Endothelial cell of umbilical vein (primary cell): ENCODE measurements at regions of chr2 and their contacts with region 1.

Region 1: GRCh38 chr2:33022989-33023727 is 76.4 kb downstream of the LTBP1 start:
- DNase-seq: peak; percentile 98
- H3K4me3 ChIP-seq: no peak overlapping the region
- H3K27ac ChIP-seq: peak overlapping the region; percentile 88
- H3K4me1 ChIP-seq: peaks cover 41% of the 10 kb centered on the region
- H3K27me3 ChIP-seq: no peaks in the 10 kb centered on the region
- CTCF ChIP-seq: no peak
- POLR2A ChIP-seq: peak; percentile 52

Region 2: GRCh38 chr2:32946314-32947075 is 76.7 kb before region 1 on chr2 and contains the start of gene LTBP1:
- CTCF ChIA-PET with region 1: interaction called, 6 read pairs
- POLR2A ChIA-PET with region 1: no interaction called
- dilution Hi-C with region 1: no loop called
- intact Hi-C with region 1: loop called (anchors 1 kb)
- DNase-seq: peak; percentile 77
- H3K4me3 ChIP-seq: peak within 1 kb of the TSS; percentile 50 to 86 (median 55)
- H3K27ac ChIP-seq: peak within 1 kb of the TSS; percentile 58
- H3K4me1 ChIP-seq: peaks cover 10% of the 10 kb centered on the region
- H3K27me3 ChIP-seq: no peaks in the 10 kb centered on the region
- CTCF ChIP-seq: peak; percentile 88 to 90
- POLR2A ChIP-seq: peak; percentile 14
- total RNA-seq, gene LTBP1: 68.2 and 107 TPM in 2 replicates

Region 3: DNA sequence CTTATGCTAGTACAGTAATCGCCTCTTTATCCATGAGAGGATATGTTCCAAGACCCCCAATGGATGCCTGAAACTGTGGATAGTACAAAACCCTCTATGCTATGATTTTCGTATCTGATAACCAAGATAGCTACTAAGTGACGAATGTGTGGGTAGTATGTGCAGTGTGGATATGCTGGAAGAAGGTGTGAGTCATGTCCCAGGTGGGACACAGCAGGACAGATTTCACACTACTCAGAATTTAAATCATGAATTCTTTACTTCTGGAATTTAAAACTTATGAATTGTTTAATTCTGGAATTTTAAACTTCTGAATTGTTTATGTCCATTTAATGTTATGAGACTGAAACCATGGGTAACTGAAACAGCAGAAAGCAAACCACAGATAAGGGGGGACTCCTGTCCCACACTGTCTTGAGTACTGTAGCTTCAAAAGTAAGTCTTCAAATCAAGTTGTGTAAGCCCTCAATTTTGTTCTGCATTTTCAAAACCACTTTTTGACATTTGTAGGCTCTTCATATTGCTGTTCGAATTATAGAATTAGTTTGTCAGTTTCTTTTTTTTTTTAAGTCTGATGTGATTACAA is 39.6 kb after region 1 on chr2:
- CTCF ChIA-PET with region 1: no interaction called
- POLR2A ChIA-PET with region 1: no interaction called
- dilution Hi-C with region 1: no loop called
- intact Hi-C with region 1: loop called (anchors 1 kb)
- DNase-seq: no peak
- H3K4me3 ChIP-seq: no peak overlapping the region
- H3K27ac ChIP-seq: no peak overlapping the region
- H3K4me1 ChIP-seq: peaks cover 19% of the 10 kb centered on the region
- H3K27me3 ChIP-seq: no peaks in the 10 kb centered on the region
- CTCF ChIP-seq: no peak
- POLR2A ChIP-seq: no peak

Region 4: DNA sequence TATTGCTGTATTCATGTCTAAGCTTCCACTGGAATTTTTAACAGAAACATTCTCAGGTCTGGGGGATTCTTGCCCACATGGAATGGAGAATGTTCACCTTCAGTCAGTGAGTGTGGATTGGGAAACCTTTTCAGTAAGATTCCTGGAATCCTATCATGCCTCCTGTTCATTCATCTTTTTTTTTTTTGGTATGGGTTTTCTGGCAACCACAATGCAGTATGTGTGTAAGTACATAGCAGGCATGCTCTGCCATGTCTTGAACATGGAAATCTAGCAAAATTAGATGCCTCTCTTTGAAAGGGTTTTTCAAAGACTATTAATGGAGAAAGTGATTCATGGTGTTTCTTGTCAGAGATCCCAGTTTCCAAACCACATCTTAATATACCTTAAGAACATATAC is 100.1 kb after region 1 on chr2:
- CTCF ChIA-PET with region 1: no interaction called
- POLR2A ChIA-PET with region 1: no interaction called
- dilution Hi-C with region 1: no loop called
- intact Hi-C with region 1: no loop called
- DNase-seq: no peak
- H3K4me3 ChIP-seq: no peak overlapping the region
- H3K27ac ChIP-seq: no peak overlapping the region
- H3K4me1 ChIP-seq: no peaks in the 10 kb centered on the region
- H3K27me3 ChIP-seq: no peaks in the 10 kb centered on the region
- CTCF ChIP-seq: no peak
- POLR2A ChIP-seq: no peak

Region 5: GRCh38 chr2:33210626-33211025 is 187.5 kb after region 1 on chr2:
- CTCF ChIA-PET with region 1: no interaction called
- POLR2A ChIA-PET with region 1: no interaction called
- dilution Hi-C with region 1: no loop called
- intact Hi-C with region 1: loop called (anchors 2 kb)
- DNase-seq: peak; percentile 94
- H3K4me3 ChIP-seq: no peak overlapping the region
- H3K27ac ChIP-seq: peak overlapping the region; percentile 97
- H3K4me1 ChIP-seq: peaks cover 64% of the 10 kb centered on the region
- H3K27me3 ChIP-seq: no peaks in the 10 kb centered on the region
- CTCF ChIP-seq: no peak
- POLR2A ChIP-seq: peak; percentile 43

Region 6: GRCh38 chr2:33291278-33292013 is 268.3 kb after region 1 on chr2:
- CTCF ChIA-PET with region 1: no interaction called
- POLR2A ChIA-PET with region 1: no interaction called
- dilution Hi-C with region 1: no loop called
- intact Hi-C with region 1: loop called (anchors 1 kb)
- DNase-seq: peak; percentile 99
- H3K4me3 ChIP-seq: peak overlapping the region in 2 of 3 experiments; percentile 20 to 29
- H3K27ac ChIP-seq: peak overlapping the region; percentile 92
- H3K4me1 ChIP-seq: peaks cover 40% of the 10 kb centered on the region
- H3K27me3 ChIP-seq: no peaks in the 10 kb centered on the region
- CTCF ChIP-seq: no peak
- POLR2A ChIP-seq: no peak

Region 7: DNA sequence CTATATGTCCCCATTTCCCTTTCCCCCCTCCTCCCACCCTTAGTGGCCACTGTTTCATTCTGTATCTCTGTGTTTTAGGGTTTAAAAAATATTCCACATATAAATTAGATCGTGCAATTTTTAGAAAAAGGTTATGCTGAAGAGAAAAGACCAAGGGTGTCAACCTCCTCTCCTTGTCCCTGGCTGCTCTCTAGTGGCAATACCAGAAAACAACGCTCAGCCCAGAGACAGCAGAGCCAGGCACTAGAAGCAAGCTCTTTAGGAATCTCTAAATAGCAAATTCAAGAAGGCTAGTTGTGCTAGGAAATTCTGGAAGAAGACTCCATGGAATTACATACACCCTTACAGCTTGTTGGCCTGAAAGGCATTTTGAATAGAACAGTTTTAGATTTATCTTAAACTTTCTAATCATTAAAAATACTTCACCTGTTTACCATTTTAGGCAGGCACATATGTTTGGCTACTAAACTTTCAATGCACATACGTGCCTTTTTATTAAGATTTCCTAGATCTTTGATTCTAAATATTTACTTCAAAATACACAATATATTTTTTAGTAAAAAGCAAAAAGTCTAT is 418.2 kb after region 1 on chr2:
- CTCF ChIA-PET with region 1: no interaction called
- POLR2A ChIA-PET with region 1: no interaction called
- dilution Hi-C with region 1: no loop called
- intact Hi-C with region 1: loop called (anchors 5 kb)
- DNase-seq: peak; percentile 79
- H3K4me3 ChIP-seq: no peak overlapping the region
- H3K27ac ChIP-seq: no peak overlapping the region
- H3K4me1 ChIP-seq: peaks cover 19% of the 10 kb centered on the region
- H3K27me3 ChIP-seq: no peaks in the 10 kb centered on the region
- CTCF ChIP-seq: peak; percentile 74
- POLR2A ChIP-seq: no peak

Region 8: GRCh38 chr2:33510586-33510968 is 487.4 kb after region 1 on chr2:
- CTCF ChIA-PET with region 1: no interaction called
- POLR2A ChIA-PET with region 1: no interaction called
- dilution Hi-C with region 1: no loop called
- intact Hi-C with region 1: no loop called
- DNase-seq: no peak
- H3K4me3 ChIP-seq: no peak overlapping the region
- H3K27ac ChIP-seq: no peak overlapping the region
- H3K4me1 ChIP-seq: no peaks in the 10 kb centered on the region
- H3K27me3 ChIP-seq: no peaks in the 10 kb centered on the region
- CTCF ChIP-seq: no peak
- POLR2A ChIP-seq: no peak